ENCODE measurements at regions of chr1 and their contacts with region 1.

Region 1: DNA sequence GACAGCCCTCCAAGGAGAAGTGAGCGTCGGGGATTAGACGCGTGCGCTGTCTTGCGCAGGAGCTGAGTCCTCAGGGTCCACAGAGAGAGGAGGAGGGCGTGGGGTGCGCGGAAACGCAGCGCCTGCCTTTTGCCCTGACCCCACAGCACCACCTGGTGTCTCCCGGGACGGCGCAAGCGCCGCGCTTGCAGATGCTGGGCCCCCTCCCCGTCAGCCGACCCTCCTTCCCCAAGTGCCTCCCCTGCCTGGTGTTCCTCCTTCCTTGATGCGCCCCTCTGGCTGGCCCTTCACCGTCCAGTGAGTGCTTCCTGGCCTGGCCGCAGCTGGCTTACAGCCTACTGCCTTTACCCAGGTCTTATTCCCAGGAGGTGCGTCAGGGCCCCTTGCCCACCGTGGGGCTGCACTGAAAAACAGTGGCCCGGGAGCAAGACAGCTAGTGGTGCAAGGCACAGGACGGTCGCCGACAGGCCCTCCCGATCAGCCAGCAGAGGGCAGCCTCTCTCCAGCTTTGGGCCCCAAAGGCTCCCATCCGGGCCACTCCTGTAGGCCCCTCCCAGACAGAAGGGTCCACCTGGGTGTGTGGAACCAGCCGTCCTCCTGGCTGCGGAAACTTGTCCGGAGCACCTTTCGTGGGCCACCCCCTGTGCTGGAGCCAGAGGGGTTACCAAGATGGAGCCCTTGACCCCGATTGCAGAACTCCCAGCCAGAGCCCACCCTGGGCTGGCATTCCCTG is 12.9 kb upstream of the PHLDA3 start:
- DNase-seq: peak; percentile 80
- H3K4me3 ChIP-seq: no peak overlapping the region
- H3K27ac ChIP-seq: no peak overlapping the region
- H3K4me1 ChIP-seq: peaks cover 25% of the 10 kb centered on the region
- H3K27me3 ChIP-seq: peaks cover 0 to 3% of the 10 kb centered on the region in 2 experiments
- CTCF ChIP-seq: peak; percentile 91 to 92
- POLR2A ChIP-seq: no peak

Region 2: GRCh38 chr1:201447911-201448871 is 33.7 kb before region 1 on chr1:
- CTCF ChIA-PET with region 1: interaction called, 92 read pairs
- POLR2A ChIA-PET with region 1: no interaction called
- dilution Hi-C with region 1: no loop called
- intact Hi-C with region 1: loop called (anchors 1 kb)
- DNase-seq: peak; percentile 57
- H3K4me3 ChIP-seq: no peak overlapping the region
- H3K27ac ChIP-seq: no peak overlapping the region
- H3K4me1 ChIP-seq: no peaks in the 10 kb centered on the region
- H3K27me3 ChIP-seq: peaks cover 0 to 2% of the 10 kb centered on the region in 2 experiments
- CTCF ChIP-seq: peak; percentile 72 to 80
- POLR2A ChIP-seq: no peak

Region 3: GRCh38 chr1:201460814-201461657 is 20.9 kb before region 1 on chr1:
- CTCF ChIA-PET with region 1: interaction called, 11 read pairs
- POLR2A ChIA-PET with region 1: no interaction called
- dilution Hi-C with region 1: no loop called
- intact Hi-C with region 1: no loop called
- DNase-seq: peak; percentile 82
- H3K4me3 ChIP-seq: no peak overlapping the region
- H3K27ac ChIP-seq: no peak overlapping the region
- H3K4me1 ChIP-seq: peaks cover 13% of the 10 kb centered on the region
- H3K27me3 ChIP-seq: no peaks in the 10 kb centered on the region
- CTCF ChIP-seq: no peak
- POLR2A ChIP-seq: peak; percentile 53

Region 4: GRCh38 chr1:201468844-201469511 is 12.9 kb before region 1 on chr1 and contains the start of gene PHLDA3:
- CTCF ChIA-PET with region 1: interaction called, 21 read pairs
- POLR2A ChIA-PET with region 1: interaction called, 13 read pairs
- dilution Hi-C with region 1: no loop called
- intact Hi-C with region 1: loop called (anchors 1 kb)
- DNase-seq: peak; percentile 86
- H3K4me3 ChIP-seq: peak within 1 kb of the TSS; percentile 13 to 85 (median 53)
- H3K27ac ChIP-seq: peak within 1 kb of the TSS; percentile 13
- H3K4me1 ChIP-seq: peaks cover 5% of the 10 kb centered on the region
- H3K27me3 ChIP-seq: peaks cover 3% of the 10 kb centered on the region in 2 experiments
- CTCF ChIP-seq: no peak
- POLR2A ChIP-seq: peak; percentile 83
- total RNA-seq, gene PHLDA3: 29.5 and 35.6 TPM in 2 replicates

Region 5: GRCh38 chr1:201506556-201507359 is 24.8 kb after region 1 on chr1 and contains the start of gene CSRP1:
- CTCF ChIA-PET with region 1: interaction called, 1,317 read pairs
- POLR2A ChIA-PET with region 1: interaction called, 124 read pairs
- dilution Hi-C with region 1: no loop called
- intact Hi-C with region 1: loop called (anchors 1 kb)
- DNase-seq: peak; percentile 74
- H3K4me3 ChIP-seq: peak within 1 kb of the TSS; percentile 47 to 84 (median 72)
- H3K27ac ChIP-seq: peak within 1 kb of the TSS; percentile 89
- H3K4me1 ChIP-seq: peaks cover 49% of the 10 kb centered on the region
- H3K27me3 ChIP-seq: no peaks in the 10 kb centered on the region
- CTCF ChIP-seq: no peak
- POLR2A ChIP-seq: peak; percentile 96
- total RNA-seq, gene CSRP1: 332 and 393 TPM in 2 replicates

Region 6: DNA sequence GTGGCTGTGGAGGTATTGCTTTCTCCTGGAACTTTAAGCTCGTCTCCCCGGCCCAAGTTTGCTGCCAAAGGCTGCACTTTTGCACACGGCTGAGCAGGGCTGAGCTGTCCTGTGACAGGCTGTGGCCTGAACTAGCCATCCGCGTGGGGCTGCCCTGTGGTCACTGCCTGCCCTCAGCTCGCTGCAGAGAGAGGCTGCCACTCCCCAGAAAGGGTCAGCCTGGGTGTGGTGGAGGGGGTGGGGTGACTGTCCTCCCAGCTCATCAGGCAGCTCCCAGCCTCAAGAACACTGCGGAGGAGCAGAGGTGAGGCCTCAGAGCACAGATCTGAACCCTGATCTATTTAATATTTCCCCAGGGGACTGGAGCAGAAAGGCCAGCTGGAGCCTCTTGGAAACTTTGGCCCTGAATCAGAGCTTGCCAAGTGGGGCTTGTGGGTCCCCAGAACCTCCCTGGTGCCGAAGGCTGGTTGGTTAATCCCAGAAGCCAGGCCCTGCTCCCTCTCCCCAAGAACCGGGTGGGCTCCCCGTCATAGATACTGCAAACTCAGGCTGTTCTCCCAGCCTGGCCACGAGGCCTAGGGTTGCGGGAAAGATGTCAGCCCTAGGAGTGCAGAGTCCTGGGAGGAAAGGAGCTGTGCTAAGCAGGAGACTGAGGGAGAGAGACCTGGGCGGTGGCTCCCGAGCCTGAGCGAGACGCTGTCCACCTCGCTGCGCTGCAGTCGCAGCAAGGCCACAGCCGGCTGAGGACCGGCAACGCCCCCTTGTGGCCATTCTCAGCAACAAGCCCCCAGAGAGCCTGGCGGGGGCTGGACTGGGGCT is 221.9 kb after region 1 on chr1:
- CTCF ChIA-PET with region 1: interaction called, 8 read pairs
- POLR2A ChIA-PET with region 1: no interaction called
- dilution Hi-C with region 1: no loop called
- intact Hi-C with region 1: loop called (anchors 2 kb)
- DNase-seq: peak; percentile 73
- H3K4me3 ChIP-seq: no peak overlapping the region
- H3K27ac ChIP-seq: no peak overlapping the region
- H3K4me1 ChIP-seq: no peaks in the 10 kb centered on the region
- H3K27me3 ChIP-seq: no peaks in the 10 kb centered on the region
- CTCF ChIP-seq: peak; percentile 96 to 98
- POLR2A ChIP-seq: no peak

Region 7: GRCh38 chr1:201807958-201808632 is 326.2 kb after region 1 on chr1:
- CTCF ChIA-PET with region 1: no interaction called
- POLR2A ChIA-PET with region 1: no interaction called
- dilution Hi-C with region 1: no loop called
- intact Hi-C with region 1: no loop called
- DNase-seq: no peak
- H3K4me3 ChIP-seq: no peak overlapping the region
- H3K27ac ChIP-seq: no peak overlapping the region
- H3K4me1 ChIP-seq: no peaks in the 10 kb centered on the region
- H3K27me3 ChIP-seq: no peaks in the 10 kb centered on the region
- CTCF ChIP-seq: no peak
- POLR2A ChIP-seq: no peak